Gastrocnemius medialis (tissue), 4 donors: ENCODE measurements at regions of chr3 and their contacts with region 1.

Region 1: DNA sequence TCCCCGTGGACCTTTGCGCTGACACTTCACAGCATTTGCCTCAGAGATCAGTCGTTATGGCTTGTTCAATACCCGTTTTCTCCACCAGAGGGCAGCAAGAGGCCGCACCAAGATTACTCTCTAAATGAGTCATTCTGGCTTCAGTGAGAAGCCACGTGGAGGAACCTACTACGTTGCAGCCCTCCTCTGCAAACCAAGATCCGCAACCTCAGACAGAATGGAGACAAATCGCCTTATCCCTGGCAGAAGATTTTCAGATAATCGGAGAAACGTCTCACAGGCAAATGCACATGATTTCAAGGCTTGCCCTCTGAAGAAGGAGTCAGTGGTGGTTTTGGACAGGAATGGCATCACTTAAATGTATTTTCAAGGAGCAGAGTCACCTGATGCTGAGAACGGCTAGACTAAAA is 60.5 kb downstream of the GTPBP8 start:
- DNase-seq: peak; percentile 65 to 79
- ATAC-seq: peak; percentile 98 to 99
- H3K4me3 ChIP-seq: peak overlapping the region in 2 of 4 donors; percentile 14 to 48
- H3K27ac ChIP-seq: peak overlapping the region in 2 of 4 donors; percentile 16 to 32
- H3K4me1 ChIP-seq: peaks cover 7 to 9% of the 10 kb centered on the region in 2 donors
- H3K27me3 ChIP-seq: no peaks in the 10 kb centered on the region
- CTCF ChIP-seq: peak; percentile 94 to 97 (median 95)
- POLR2A ChIP-seq: no peak

Region 2: DNA sequence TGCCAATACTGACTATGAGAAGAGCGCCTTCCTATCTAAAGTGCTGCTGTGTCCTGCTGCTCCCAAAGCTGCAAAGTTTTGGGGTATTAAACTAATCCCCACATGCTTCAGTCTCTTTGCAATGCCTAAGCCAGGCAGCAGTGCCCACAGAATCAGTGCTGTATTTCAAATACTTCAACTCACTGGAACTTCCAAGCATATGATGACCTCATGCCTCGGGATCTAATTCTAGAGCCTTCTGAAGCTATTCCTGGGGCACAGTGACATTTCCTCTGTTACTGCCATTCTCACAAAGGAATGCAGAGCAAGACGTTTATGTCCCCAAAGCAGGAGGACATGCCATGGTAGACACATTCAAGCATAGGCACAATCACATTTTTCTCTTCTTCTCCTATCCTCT is 639.9 kb before region 1 on chr3:
- in situ Hi-C with region 1: no loop called
- intact Hi-C with region 1: no loop called
- DNase-seq: no peak
- ATAC-seq: no peak
- H3K4me3 ChIP-seq: no peak overlapping the region
- H3K27ac ChIP-seq: no peak overlapping the region
- H3K4me1 ChIP-seq: no peaks in the 10 kb centered on the region
- H3K27me3 ChIP-seq: no peaks in the 10 kb centered on the region
- CTCF ChIP-seq: no peak
- POLR2A ChIP-seq: no peak

Region 3: GRCh38 chr3:112888381-112889085 is 162.8 kb before region 1 on chr3:
- in situ Hi-C with region 1: no loop called
- intact Hi-C with region 1: no loop called
- DNase-seq: no peak
- ATAC-seq: no peak
- H3K4me3 ChIP-seq: no peak overlapping the region
- H3K27ac ChIP-seq: no peak overlapping the region
- H3K4me1 ChIP-seq: no peaks in the 10 kb centered on the region
- H3K27me3 ChIP-seq: no peaks in the 10 kb centered on the region
- CTCF ChIP-seq: no peak
- POLR2A ChIP-seq: no peak

Region 4: GRCh38 chr3:113136071-113136470 is 84.8 kb after region 1 on chr3:
- in situ Hi-C with region 1: loop called in 1 of 4 experiments (anchors 10 kb)
- intact Hi-C with region 1: loop called (anchors 5 kb)
- DNase-seq: no peak
- ATAC-seq: no peak
- H3K4me3 ChIP-seq: no peak overlapping the region
- H3K27ac ChIP-seq: no peak overlapping the region
- H3K4me1 ChIP-seq: no peaks in the 10 kb centered on the region
- H3K27me3 ChIP-seq: no peaks in the 10 kb centered on the region
- CTCF ChIP-seq: peak; percentile 25 to 50 (median 39)
- POLR2A ChIP-seq: no peak

Region 5: GRCh38 chr3:113287803-113288648 is 236.7 kb after region 1 on chr3:
- in situ Hi-C with region 1: loop called in 3 of 4 experiments (anchors 5 kb)
- intact Hi-C with region 1: loop called (anchors 1 kb)
- DNase-seq: no peak
- ATAC-seq: peak in 1 of 2 donors; percentile 59
- H3K4me3 ChIP-seq: no peak overlapping the region
- H3K27ac ChIP-seq: no peak overlapping the region
- H3K4me1 ChIP-seq: no peaks in the 10 kb centered on the region
- H3K27me3 ChIP-seq: no peaks in the 10 kb centered on the region
- CTCF ChIP-seq: peak; percentile 93 to 99 (median 96)
- POLR2A ChIP-seq: no peak

Region 6: DNA sequence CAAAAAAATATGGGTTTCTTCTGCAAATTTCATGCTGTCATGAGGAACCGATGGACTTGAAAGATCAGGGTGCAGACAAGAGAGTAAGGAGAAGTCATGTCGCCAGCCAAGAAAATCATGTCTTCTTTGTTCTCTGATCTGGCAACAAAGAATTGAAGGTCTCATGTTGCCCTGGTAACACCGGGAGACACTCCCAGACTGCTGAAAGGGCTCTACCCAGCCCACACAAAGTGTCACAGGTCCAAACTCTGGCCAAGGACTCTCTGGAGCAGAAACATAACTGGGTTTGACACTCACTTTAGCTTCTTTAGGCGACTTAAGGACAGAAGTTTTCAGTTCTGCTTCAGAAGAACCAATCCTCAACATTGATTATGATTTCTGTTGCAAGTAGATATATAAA is 523.9 kb after region 1 on chr3:
- in situ Hi-C with region 1: no loop called
- intact Hi-C with region 1: loop called (anchors 1 kb)
- DNase-seq: no peak
- ATAC-seq: no peak
- H3K4me3 ChIP-seq: no peak overlapping the region
- H3K27ac ChIP-seq: no peak overlapping the region
- H3K4me1 ChIP-seq: no peaks in the 10 kb centered on the region
- H3K27me3 ChIP-seq: no peaks in the 10 kb centered on the region
- CTCF ChIP-seq: no peak
- POLR2A ChIP-seq: no peak

Region 7: DNA sequence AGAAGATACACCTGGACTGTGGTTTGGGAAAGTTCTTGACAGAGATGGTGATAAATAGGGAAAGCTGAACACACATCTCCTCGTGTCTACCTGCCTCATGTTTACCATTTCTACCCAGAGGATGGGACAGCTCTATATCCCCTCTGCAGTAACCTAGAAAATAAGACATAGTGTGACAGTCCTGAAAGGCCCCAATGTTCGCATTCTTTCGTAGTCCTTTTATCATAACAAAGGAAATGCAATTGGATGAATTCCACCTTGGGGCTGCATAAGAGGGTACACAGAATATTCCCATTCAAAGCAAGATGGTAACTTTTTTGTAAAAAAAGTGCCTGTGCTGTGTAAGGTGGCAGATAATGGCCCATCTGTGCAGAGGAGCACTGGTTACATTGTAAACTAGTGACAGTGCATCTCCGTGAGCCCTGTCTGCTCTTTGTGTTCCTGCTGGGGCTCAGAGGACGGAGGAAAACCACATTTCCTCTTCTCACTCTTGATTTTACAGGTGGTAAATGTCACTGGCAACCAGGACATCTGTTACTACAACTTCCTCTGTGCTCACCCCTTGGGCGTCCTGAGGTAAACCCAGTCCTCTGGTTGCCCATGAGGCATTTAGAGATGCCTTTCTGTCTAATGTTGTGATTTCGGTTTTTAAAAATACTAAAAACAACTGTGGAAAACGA is 555.4 kb after region 1 on chr3:
- in situ Hi-C with region 1: loop called in 1 of 4 experiments (anchors 25 kb)
- intact Hi-C with region 1: no loop called
- DNase-seq: no peak
- ATAC-seq: peak in 1 of 2 donors; percentile 33
- H3K4me3 ChIP-seq: no peak overlapping the region
- H3K27ac ChIP-seq: no peak overlapping the region
- H3K4me1 ChIP-seq: peaks cover 3 to 7% of the 10 kb centered on the region in 2 donors
- H3K27me3 ChIP-seq: no peaks in the 10 kb centered on the region
- CTCF ChIP-seq: no peak
- POLR2A ChIP-seq: no peak

Region 8: DNA sequence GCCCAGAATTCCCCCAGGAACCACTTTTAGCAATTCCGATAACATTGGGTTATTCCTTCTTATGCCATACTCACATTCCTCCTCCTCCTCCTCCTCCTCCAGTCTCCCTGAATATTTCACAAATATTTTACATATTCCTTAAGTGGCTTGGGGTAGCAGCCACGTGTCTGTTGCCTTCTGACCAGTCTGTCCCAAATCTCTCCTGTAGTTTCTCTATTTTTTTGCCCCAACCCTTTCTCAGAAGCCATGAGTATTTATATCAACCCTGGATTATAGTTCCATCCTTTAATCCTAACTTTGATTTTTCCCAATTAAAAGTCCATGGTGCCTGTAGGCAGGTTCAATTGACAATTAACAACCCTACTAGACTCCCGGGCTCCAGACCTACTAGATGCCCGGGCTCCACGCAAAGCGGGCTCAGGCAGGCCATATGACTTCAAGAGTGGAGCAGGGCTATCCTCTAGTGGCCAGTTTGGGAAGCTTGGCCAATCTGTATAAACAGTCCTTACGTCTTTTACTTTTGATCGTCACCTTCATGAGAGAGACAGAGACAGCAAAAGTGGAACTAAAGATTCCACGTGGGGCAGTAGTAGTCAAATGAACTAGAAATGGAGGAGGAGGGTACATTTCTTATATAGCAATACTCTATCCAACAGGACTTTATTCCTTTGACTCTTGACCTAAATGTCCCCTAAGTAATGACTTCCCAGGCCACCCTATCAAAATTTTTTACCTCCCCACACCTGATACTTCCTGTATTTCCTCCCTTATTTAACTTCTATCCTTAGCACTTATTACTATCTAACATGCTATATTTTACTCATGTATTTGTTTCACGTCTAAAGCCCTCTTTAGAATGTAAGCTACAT is 575.4 kb after region 1 on chr3:
- in situ Hi-C with region 1: loop called in 1 of 4 experiments (anchors 25 kb)
- intact Hi-C with region 1: loop called (anchors 5 kb)
- DNase-seq: peak; percentile 38 to 64
- ATAC-seq: peak; percentile 72 to 76
- H3K4me3 ChIP-seq: peak overlapping the region in 3 of 4 donors; percentile 2 to 16 (median 9)
- H3K27ac ChIP-seq: peak overlapping the region; percentile 59 to 65 (median 61)
- H3K4me1 ChIP-seq: peaks cover 34 to 51% of the 10 kb centered on the region in 2 donors
- H3K27me3 ChIP-seq: no peaks in the 10 kb centered on the region
- CTCF ChIP-seq: peak; percentile 79 to 97 (median 89)
- POLR2A ChIP-seq: no peak